ENCODE measurements at regions of chr3 and their contacts with region 1.

Region 1: GRCh38 chr3:196432137-196432879 is at the start of gene UBXN7:
- DNase-seq: peak; percentile 71 to 96
- H3K4me3 ChIP-seq: peak within 1 kb of the TSS; percentile 87 to 96
- H3K27ac ChIP-seq: peak within 1 kb of the TSS; percentile 87 to 96
- H3K4me1 ChIP-seq: peaks cover 0 to 6% of the 10 kb centered on the region in 2 donors
- H3K27me3 ChIP-seq: no peaks in the 10 kb centered on the region
- CTCF ChIP-seq: peak in 1 of 3 experiments; percentile 2
- total RNA-seq, gene UBXN7: 7.2 TPM

Region 2: DNA sequence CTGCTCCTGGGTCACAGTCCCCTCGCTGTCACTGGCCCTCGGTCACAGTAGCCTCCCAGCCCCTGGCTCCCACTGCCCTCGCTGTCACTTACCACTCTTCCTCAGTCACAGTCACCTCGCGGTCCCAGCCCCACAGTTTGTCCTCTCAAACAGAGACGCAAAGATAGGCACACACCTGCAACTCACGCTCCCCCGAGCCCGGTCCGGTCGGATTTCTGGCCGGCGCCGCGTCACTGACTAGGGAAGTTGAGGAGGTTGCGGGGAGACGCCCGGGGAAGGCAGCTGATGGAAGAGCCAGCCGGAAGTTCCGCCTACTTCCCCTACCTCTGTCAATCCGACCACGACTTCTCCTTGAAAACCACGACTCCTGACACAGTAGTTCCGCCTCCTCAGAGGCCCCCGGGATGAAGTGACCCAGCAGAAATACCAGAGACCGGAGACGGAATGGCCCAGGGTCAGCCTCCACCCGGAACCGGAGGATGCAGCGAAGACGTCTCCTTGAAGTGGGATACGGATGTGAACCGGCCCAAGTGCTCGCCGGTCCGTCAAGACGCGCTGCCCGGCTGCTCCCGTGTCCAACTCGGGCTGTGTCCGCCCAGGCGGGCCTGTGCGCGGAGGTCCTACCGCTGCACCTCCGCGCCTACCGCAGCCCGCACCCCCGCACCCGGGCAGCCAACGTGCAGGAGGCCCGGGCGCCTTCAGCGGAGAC is 144.7 kb before region 1 on chr3 and contains the start of gene PCYT1A:
- intact Hi-C with region 1: loop called (anchors 1 kb)
- DNase-seq: peak; percentile 77 to 96
- H3K4me3 ChIP-seq: peak within 1 kb of the TSS; percentile 75 to 78
- H3K27ac ChIP-seq: peak within 1 kb of the TSS; percentile 82 to 92
- H3K4me1 ChIP-seq: peaks cover 0 to 30% of the 10 kb centered on the region in 2 donors
- H3K27me3 ChIP-seq: no peaks in the 10 kb centered on the region
- CTCF ChIP-seq: no peak
- total RNA-seq, gene PCYT1A: 30.7 TPM

Region 3: GRCh38 chr3:196317687-196318467 is 114.4 kb before region 1 on chr3 and contains the start of gene DYNLT2B:
- intact Hi-C with region 1: loop called (anchors 5 kb)
- DNase-seq: peak; percentile 49 to 91
- H3K4me3 ChIP-seq: peak within 1 kb of the TSS; percentile 92 to 97
- H3K27ac ChIP-seq: peak within 1 kb of the TSS; percentile 88 to 89
- H3K4me1 ChIP-seq: no peaks in the 10 kb centered on the region
- H3K27me3 ChIP-seq: no peaks in the 10 kb centered on the region
- CTCF ChIP-seq: no peak
- total RNA-seq, gene DYNLT2B: not detected

Measured in ascending aorta (tissue), 2 donors.